ENCODE measurements at regions of chr1 and their contacts with region 1.

Region 1: DNA sequence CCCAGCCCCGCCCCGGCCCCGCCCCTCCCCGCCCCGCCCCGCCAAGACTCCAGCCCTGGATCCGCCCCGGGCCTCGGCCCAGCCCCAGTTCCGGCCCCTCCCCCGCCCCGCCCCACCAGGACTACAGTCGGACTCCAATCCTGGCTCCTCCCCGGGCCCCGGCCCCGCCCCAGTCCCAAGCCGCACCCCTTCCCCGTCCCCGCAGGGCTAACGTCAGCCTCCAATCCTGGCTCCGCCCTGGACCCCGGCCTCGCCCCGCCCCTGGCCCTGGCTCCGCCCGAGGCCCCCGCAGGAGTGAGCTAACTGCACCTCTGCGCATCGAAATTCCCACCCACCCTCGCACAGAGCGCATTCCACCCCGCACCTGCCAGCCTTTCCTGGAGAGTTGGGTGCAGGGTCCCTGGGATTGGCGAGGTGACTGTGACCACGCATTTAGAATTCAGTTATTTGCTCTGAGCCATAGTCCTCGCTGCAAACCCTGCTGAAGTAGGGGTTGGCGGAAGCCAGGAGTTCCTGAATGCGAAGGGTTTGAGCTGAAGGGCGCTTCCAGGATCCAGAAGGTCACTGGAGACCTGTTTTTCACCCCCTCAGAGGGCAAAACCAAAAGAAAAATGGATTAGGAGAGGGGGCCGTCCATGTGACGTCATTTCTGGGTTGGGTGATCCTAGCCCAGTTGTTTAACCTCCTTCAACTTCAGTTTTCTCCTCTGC is 588 bp upstream of the IGSF8 start:
- DNase-seq: peak; percentile 89 to 99
- H3K4me3 ChIP-seq: peak overlapping the region; percentile 69 to 85
- H3K27ac ChIP-seq: peak overlapping the region; percentile 93 to 99
- H3K4me1 ChIP-seq: peaks cover 26 to 40% of the 10 kb centered on the region in 2 donors
- H3K27me3 ChIP-seq: no peaks in the 10 kb centered on the region
- CTCF ChIP-seq: no peak

Region 2: DNA sequence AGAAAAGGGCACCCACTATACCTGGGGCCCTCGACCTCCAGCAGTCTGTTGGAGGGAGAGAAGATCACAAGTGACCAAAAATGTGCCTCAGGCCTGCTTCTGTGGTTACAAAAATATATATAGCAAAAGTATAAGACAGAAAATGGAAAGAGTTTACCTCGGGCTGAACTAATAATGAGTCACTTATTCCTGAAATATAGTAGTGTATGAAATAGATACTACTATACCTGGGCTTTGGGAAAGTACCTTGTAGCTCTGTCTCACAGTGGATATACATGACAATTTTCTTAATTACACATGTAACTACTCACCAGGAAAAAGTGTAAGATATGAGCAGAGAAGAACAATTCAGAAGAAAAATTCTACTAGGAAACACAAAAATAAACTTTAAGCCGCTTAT is 518.7 kb before region 1 on chr1:
- intact Hi-C with region 1: no loop called
- DNase-seq: no peak
- H3K4me3 ChIP-seq: no peak overlapping the region
- H3K27ac ChIP-seq: no peak overlapping the region
- H3K4me1 ChIP-seq: no peaks in the 10 kb centered on the region
- H3K27me3 ChIP-seq: no peaks in the 10 kb centered on the region
- CTCF ChIP-seq: no peak

Region 3: GRCh38 chr1:160085686-160086455 is 13.1 kb before region 1 on chr1:
- intact Hi-C with region 1: loop called (anchors 1 kb)
- DNase-seq: peak in 1 of 2 donors; percentile 92
- H3K4me3 ChIP-seq: peak overlapping the region in 1 of 2 donors; percentile 39
- H3K27ac ChIP-seq: peak overlapping the region; percentile 82 to 84
- H3K4me1 ChIP-seq: peaks cover 7 to 25% of the 10 kb centered on the region in 2 donors
- H3K27me3 ChIP-seq: no peaks in the 10 kb centered on the region
- CTCF ChIP-seq: peak; percentile 74 to 87 (median 84)

Region 4: GRCh38 chr1:160117709-160118183 is 18.7 kb after region 1 on chr1:
- intact Hi-C with region 1: no loop called
- DNase-seq: no peak
- H3K4me3 ChIP-seq: peak overlapping the region; percentile 50 to 68
- H3K27ac ChIP-seq: peak overlapping the region; percentile 53 to 86
- H3K4me1 ChIP-seq: peaks cover 11 to 41% of the 10 kb centered on the region in 2 donors
- H3K27me3 ChIP-seq: no peaks in the 10 kb centered on the region
- CTCF ChIP-seq: no peak

Region 5: GRCh38 chr1:160161965-160162705 is 63.1 kb after region 1 on chr1:
- intact Hi-C with region 1: loop called (anchors 10 kb)
- DNase-seq: no peak
- H3K4me3 ChIP-seq: no peak overlapping the region
- H3K27ac ChIP-seq: no peak overlapping the region
- H3K4me1 ChIP-seq: no peaks in the 10 kb centered on the region
- H3K27me3 ChIP-seq: no peaks in the 10 kb centered on the region
- CTCF ChIP-seq: peak in 2 of 3 experiments; percentile 45 to 53

Region 6: GRCh38 chr1:160205242-160206035 is 106.4 kb after region 1 on chr1 and contains the start of gene PEA15:
- intact Hi-C with region 1: no loop called
- DNase-seq: peak in 1 of 2 donors; percentile 85
- H3K4me3 ChIP-seq: peak within 1 kb of the TSS; percentile 87 to 94
- H3K27ac ChIP-seq: peak within 1 kb of the TSS; percentile 94 to 98
- H3K4me1 ChIP-seq: peaks cover under 1 to 42% of the 10 kb centered on the region in 2 donors
- H3K27me3 ChIP-seq: no peaks in the 10 kb centered on the region
- CTCF ChIP-seq: no peak
- total RNA-seq, gene PEA15: 178 TPM

Region 7: GRCh38 chr1:160219062-160219929 is 120.3 kb after region 1 on chr1:
- intact Hi-C with region 1: loop called (anchors 1 kb)
- DNase-seq: peak in 1 of 2 donors; percentile 73
- H3K4me3 ChIP-seq: no peak overlapping the region
- H3K27ac ChIP-seq: peak overlapping the region; percentile 79 to 89
- H3K4me1 ChIP-seq: peaks cover 0 to 21% of the 10 kb centered on the region in 2 donors
- H3K27me3 ChIP-seq: no peaks in the 10 kb centered on the region
- CTCF ChIP-seq: peak; percentile 61 to 74 (median 65)

Region 8: GRCh38 chr1:160232911-160233310 is 133.9 kb after region 1 on chr1:
- intact Hi-C with region 1: no loop called
- DNase-seq: no peak
- H3K4me3 ChIP-seq: no peak overlapping the region
- H3K27ac ChIP-seq: no peak overlapping the region
- H3K4me1 ChIP-seq: no peaks in the 10 kb centered on the region
- H3K27me3 ChIP-seq: no peaks in the 10 kb centered on the region
- CTCF ChIP-seq: no peak

Region 9: GRCh38 chr1:160261893-160262794 is 163.1 kb after region 1 on chr1 and contains the start of gene DCAF8:
- intact Hi-C with region 1: loop called (anchors 2 kb)
- DNase-seq: peak; percentile 90 to 99
- H3K4me3 ChIP-seq: peak within 1 kb of the TSS; percentile 85 to 98
- H3K27ac ChIP-seq: peak within 1 kb of the TSS; percentile 98
- H3K4me1 ChIP-seq: peaks cover 0 to 24% of the 10 kb centered on the region in 2 donors
- H3K27me3 ChIP-seq: no peaks in the 10 kb centered on the region
- CTCF ChIP-seq: no peak
- total RNA-seq, gene DCAF8: 68.9 TPM

Region 10: DNA sequence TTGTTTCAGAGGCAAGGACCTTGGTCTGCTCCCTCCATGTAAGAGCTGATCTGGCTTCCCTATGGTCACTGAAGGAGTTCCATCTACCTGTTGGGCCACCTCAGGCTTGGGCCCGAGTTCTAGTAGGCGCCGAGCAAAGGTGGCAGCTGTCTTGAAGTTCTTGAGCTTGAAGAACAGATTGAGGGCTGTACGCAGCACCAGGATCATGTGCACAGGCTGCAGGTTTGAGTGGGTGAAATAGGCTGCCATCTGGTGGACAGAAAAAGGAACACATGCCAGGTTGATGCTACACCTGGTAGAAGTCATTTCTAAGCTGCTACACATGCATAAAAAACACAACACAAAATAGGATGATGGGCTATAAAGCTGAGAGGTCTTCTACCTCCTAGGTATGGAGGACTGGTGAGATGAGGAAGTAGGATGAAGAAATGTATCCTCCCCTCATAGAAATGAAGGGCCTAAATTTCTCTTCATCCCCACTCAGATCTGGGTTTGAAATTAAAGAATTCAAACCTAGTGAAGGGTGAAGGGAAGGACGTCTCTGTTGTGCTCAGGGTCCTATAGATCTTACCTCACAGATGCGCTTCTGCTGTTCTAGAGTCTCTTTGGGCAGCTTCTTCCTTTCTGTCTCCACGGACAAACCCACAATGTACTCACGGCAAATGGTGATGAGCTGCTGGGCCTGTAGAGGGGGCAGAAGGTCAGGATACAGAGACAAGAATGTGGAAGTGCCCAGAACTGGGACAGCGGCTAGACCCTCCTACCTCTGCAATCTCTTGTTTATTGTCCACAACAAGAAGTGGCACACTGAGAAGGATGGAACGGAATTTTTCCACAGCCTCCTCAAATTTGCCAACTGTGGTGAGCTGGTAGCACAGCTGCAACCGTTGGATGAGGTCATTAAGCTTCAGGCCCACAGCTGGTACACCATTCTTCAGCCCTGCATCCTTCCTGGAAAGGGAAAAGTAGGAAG is 192.5 kb after region 1 on chr1:
- intact Hi-C with region 1: loop called (anchors 1 kb)
- DNase-seq: peak in 1 of 2 donors; percentile 72
- H3K4me3 ChIP-seq: no peak overlapping the region
- H3K27ac ChIP-seq: no peak overlapping the region
- H3K4me1 ChIP-seq: no peaks in the 10 kb centered on the region
- H3K27me3 ChIP-seq: no peaks in the 10 kb centered on the region
- CTCF ChIP-seq: peak; percentile 69 to 81 (median 74)

Measured in ascending aorta (tissue), 2 donors.